PC-3 (cell line): ENCODE measurements at regions of chr15 and their contacts with region 1.

Region 1: GRCh38 chr15:48112242-48112641 is 8.5 kb upstream of the SLC24A5 start:
- DNase-seq: peak; percentile 51
- ATAC-seq: peak; percentile 89
- H3K4me3 ChIP-seq: no peak overlapping the region
- H3K27ac ChIP-seq: no peak overlapping the region
- H3K4me1 ChIP-seq: no peaks in the 10 kb centered on the region
- H3K27me3 ChIP-seq: peaks cover 39% of the 10 kb centered on the region
- CTCF ChIP-seq: peak; percentile 63

Region 2: GRCh38 chr15:48250640-48251076 is 138.4 kb after region 1 on chr15:
- CTCF ChIA-PET with region 1: interaction called, 3 read pairs
- POLR2A ChIA-PET with region 1: no interaction called
- intact Hi-C with region 1: loop called (anchors 1 kb)
- DNase-seq: peak; percentile 60
- ATAC-seq: no peak; the same call in 1 of the 2 replicates
- H3K4me3 ChIP-seq: no peak overlapping the region
- H3K27ac ChIP-seq: no peak overlapping the region
- H3K4me1 ChIP-seq: no peaks in the 10 kb centered on the region
- H3K27me3 ChIP-seq: no peaks in the 10 kb centered on the region
- CTCF ChIP-seq: peak; percentile 66

Region 3: DNA sequence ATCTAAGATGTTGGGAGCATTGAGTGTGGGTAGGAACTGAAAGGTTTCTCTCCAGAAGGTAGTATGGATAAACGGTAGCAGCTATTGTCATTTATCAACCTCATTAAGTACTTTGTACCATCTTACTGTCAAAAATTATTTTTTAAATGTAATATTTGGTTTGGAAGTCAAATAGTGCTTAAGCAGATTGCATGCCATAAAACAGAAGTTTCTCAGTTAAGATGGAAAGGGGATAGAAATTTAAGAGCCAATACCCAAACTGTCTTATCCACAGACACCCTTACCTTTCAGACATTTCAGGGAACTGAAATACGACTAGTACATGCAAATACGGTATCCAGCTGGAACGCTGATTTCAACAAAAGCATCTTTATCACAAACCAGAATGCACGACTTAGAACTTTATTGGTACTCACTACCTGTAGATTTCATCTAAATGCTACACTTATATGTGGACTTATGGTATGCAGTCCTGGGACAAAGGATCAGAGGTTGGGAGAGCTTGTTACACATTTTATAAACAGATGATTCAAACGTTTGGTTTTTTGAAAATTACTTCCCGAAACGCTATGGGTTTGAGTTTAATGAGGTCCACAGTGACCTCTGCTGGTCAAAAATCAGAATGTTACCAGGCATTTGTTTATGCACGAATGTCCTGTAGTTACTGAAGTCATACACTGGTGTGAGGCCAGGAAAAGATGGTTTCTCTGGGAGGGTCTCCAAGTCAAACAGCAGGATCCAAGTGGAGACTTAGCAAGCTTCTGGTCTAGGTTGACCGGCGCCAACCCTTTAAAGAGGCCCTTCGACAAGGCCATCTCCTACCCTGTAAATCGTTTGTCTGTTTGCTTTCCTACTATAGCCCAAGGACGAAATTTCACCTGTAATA is 173.3 kb after region 1 on chr15:
- CTCF ChIA-PET with region 1: interaction called, 4 read pairs
- POLR2A ChIA-PET with region 1: no interaction called
- intact Hi-C with region 1: loop called (anchors 1 kb)
- DNase-seq: peak; percentile 89
- ATAC-seq: peak; percentile 89
- H3K4me3 ChIP-seq: peak overlapping the region; percentile 51; the same call in 1 of the 2 replicates
- H3K27ac ChIP-seq: no peak overlapping the region
- H3K4me1 ChIP-seq: peaks cover 7% of the 10 kb centered on the region
- H3K27me3 ChIP-seq: peaks cover 4% of the 10 kb centered on the region; the same call in 1 of the 2 replicates
- CTCF ChIP-seq: peak; percentile 76